CD8-positive, alpha-beta T cell (primary cell): ENCODE measurements at regions of chr2 and their contacts with region 1.

Region 1: GRCh38 chr2:2879781-2880180 is 497.8 kb downstream of the EIPR1 start:
- DNase-seq: no peak
- ATAC-seq: no peak
- H3K4me3 ChIP-seq: no peak overlapping the region
- H3K4me3 Mint-ChIP-seq: no peak overlapping the region
- H3K27ac ChIP-seq: no peak overlapping the region
- H3K27ac Mint-ChIP-seq: no peak overlapping the region
- H3K4me1 ChIP-seq: no peaks in the 10 kb centered on the region
- H3K4me1 Mint-ChIP-seq: no peaks in the 10 kb centered on the region
- H3K27me3 ChIP-seq: no peaks in the 10 kb centered on the region
- H3K27me3 Mint-ChIP-seq: no peaks in the 10 kb centered on the region
- CTCF ChIP-seq: no peak

Region 2: GRCh38 chr2:2899826-2900225 is 20.0 kb after region 1 on chr2:
- CTCF ChIA-PET with region 1: no interaction called
- POLR2A ChIA-PET with region 1: no interaction called
- intact Hi-C with region 1: loop called in 1 of 2 experiments (anchors 1 kb)
- DNase-seq: peak in 2 of 9 experiments; percentile 1 to 2
- ATAC-seq: no peak
- H3K4me3 ChIP-seq: no peak overlapping the region
- H3K4me3 Mint-ChIP-seq: no peak overlapping the region
- H3K27ac ChIP-seq: no peak overlapping the region
- H3K27ac Mint-ChIP-seq: no peak overlapping the region
- H3K4me1 ChIP-seq: no peaks in the 10 kb centered on the region
- H3K4me1 Mint-ChIP-seq: peaks cover 15% of the 10 kb centered on the region
- H3K27me3 ChIP-seq: no peaks in the 10 kb centered on the region
- H3K27me3 Mint-ChIP-seq: no peaks in the 10 kb centered on the region
- CTCF ChIP-seq: no peak